Activated CD8-positive, alpha-beta T cell treated with anti-CD3 and anti-CD28 coated beads for 36 hours (primary cell): ENCODE measurements at regions of chr6 and their contacts with region 1.

Region 1: DNA sequence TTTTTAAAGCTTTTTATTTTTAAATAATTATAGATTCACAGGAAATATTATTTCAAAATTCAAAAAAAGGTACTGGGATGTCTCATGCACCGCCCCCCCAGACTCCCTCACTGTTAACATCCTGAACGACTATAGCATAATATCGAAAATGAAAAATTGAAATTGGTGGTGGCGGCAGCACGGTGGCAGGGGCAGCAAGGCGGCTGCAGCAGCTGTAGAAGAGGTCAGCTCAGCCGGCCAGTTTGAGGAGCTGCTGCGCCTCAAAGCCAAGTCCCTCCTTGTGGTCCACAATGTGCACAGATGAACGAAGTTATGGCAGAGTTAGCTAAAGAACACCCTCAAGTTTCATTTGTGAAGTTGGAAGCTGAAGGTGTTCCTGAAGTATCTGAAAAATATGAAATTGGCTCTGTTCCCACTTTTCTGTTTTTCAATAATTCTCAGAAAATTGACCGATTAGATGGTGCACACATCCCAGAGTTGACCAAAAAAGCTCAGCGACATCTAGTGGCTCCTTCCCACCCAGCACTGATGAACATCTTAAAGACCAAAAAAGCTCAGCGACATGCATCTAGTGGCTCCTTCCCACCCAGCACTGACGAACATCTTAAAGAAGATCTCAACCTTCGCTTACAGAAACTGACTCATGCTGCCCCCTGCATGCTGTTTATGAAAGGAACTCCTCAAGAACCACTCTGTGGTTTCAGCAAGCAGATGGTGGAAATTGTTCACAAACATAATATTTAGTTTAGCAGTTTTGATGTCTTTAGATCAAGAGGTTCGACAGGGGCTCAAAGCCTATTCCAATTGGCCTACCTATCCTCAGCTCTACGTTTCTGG is 100.8 kb downstream of the FAM217A start:
- DNase-seq: peak; percentile 78
- ATAC-seq: peak; percentile 99
- H3K4me3 Mint-ChIP-seq: peak overlapping the region; percentile 5
- H3K27ac Mint-ChIP-seq: peak overlapping the region; percentile 24
- H3K4me1 Mint-ChIP-seq: peaks cover 11% of the 10 kb centered on the region
- H3K27me3 Mint-ChIP-seq: peaks cover 2% of the 10 kb centered on the region
- CTCF ChIP-seq: peak; percentile 72

Region 2: DNA sequence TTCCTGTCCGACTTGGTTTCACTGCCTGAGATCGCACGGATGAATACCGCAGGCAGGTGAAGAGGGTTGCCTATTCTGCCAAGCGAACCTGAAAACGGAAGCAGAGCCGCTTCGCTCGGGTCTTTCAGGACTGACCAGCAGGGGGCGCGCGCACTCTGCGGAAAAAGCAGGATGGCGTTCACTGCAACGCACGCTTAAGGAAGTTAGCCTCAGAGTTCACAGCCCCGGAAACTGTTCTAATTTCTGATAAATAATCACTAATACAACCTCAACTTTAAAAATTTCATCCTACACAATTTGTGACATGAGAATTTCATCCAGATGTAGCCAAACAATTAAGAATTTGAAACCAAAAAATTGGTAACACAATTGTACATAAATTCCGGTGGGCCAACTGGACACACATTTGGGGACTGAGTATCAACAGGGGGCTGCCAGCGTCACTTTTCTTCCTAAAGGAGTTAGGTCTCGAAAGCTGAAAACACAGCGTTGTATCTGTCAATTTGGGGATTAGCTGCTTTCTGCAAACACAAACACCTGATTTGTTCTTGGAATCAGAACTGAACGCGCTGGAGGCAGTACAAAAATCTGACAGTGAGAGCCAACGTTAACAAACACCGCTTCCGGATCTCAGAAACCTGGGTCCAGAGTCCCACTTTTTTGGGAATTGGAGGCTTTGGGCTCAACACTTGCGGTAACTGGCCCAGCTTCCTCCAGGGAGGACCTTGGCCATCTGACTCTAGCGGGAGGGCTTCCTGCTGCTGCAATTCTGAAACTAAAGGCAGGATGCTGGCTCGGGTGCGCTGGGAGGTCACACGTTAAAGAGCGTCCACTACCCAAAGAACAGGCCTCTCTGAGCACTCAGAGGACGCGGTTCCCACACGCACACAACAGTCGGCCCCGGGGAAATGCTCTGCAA is 235.4 kb before region 1 on chr6:
- CTCF ChIA-PET with region 1: interaction called, 61 read pairs
- POLR2A ChIA-PET with region 1: no interaction called
- intact Hi-C with region 1: loop called (anchors 5 kb)
- DNase-seq: peak; percentile 90
- ATAC-seq: peak; percentile 92
- H3K4me3 Mint-ChIP-seq: no peak overlapping the region
- H3K27ac Mint-ChIP-seq: peak overlapping the region; percentile 20
- H3K4me1 Mint-ChIP-seq: peaks cover 7% of the 10 kb centered on the region
- H3K27me3 Mint-ChIP-seq: peaks cover 10% of the 10 kb centered on the region
- CTCF ChIP-seq: peak; percentile 94

Region 3: DNA sequence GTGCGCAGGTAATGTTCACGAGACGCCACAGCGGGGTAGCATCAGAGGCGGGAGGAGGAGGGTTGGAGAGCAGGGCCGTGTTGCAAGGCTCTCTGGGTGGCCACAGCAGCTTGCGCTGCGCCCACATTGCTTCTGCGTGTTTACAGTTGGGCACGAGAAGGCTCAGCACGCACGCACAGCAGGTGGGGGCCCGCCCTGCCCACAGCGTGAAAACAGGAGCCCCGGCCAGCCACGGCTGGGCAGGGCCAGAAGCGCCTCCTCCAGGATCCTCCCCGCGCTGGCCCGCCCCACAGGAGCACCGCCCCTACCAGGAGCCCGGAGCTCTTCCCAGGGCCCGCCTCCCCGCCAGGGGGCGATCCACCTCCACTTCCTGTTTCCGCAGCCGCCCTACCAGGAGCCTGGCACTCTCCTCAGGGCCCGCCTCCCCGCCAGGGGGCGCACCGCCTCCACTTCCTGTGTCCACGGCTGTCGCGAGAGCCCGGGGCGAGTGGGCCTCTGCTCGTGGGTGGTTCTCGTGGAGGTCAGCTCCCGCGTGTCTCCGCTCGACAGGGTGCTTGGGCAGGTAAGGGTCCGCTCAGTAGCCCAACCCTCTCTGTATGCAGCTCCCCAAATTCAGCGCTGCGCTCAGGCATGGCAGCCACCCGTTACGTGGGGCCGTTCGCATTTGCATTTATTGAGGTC is 129.0 kb before region 1 on chr6 and contains the start of gene FAM50B:
- CTCF ChIA-PET with region 1: interaction called, 33 read pairs
- POLR2A ChIA-PET with region 1: interaction called, 11 read pairs
- intact Hi-C with region 1: no loop called
- DNase-seq: peak; percentile 93
- ATAC-seq: peak; percentile 95
- H3K4me3 Mint-ChIP-seq: peak within 1 kb of the TSS; percentile 70
- H3K27ac Mint-ChIP-seq: peak within 1 kb of the TSS; percentile 76
- H3K4me1 Mint-ChIP-seq: peaks cover 20% of the 10 kb centered on the region
- H3K27me3 Mint-ChIP-seq: no peaks in the 10 kb centered on the region
- CTCF ChIP-seq: peak; percentile 83
- total RNA-seq, gene FAM50B: 5.2 to 6.0 TPM

Region 4: GRCh38 chr6:3939964-3940363 is 38.1 kb before region 1 on chr6:
- CTCF ChIA-PET with region 1: interaction called, 13 read pairs
- POLR2A ChIA-PET with region 1: no interaction called
- intact Hi-C with region 1: no loop called
- DNase-seq: no peak
- ATAC-seq: no peak
- H3K4me3 Mint-ChIP-seq: no peak overlapping the region
- H3K27ac Mint-ChIP-seq: no peak overlapping the region
- H3K4me1 Mint-ChIP-seq: peaks cover 3% of the 10 kb centered on the region
- H3K27me3 Mint-ChIP-seq: peaks cover 20% of the 10 kb centered on the region
- CTCF ChIP-seq: no peak

Region 5: DNA sequence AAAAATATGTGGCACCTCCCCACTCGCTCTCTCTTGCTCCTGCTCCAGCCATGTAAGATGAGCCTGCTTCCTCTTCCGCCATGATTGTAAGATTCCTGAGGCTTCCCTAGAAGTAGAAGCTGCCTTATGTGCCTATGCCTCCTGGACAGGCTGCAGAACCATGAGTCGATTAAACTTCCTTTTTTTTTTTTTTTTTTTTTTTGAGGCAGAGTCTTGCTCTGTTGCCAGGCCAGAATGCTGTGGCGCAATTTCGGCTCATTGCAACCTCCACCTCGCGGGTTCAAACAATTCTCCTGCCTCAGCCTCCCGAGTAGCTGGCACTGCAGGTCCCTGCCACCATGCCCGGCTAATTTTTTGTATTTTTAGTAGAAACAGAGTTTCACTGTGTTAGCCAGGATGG is 11.7 kb before region 1 on chr6:
- CTCF ChIA-PET with region 1: interaction called, 14 read pairs
- POLR2A ChIA-PET with region 1: no interaction called
- intact Hi-C with region 1: no loop called
- DNase-seq: no peak
- ATAC-seq: no peak
- H3K4me3 Mint-ChIP-seq: no peak overlapping the region
- H3K27ac Mint-ChIP-seq: no peak overlapping the region
- H3K4me1 Mint-ChIP-seq: no peaks in the 10 kb centered on the region
- H3K27me3 Mint-ChIP-seq: no peaks in the 10 kb centered on the region
- CTCF ChIP-seq: no peak

Region 6: DNA sequence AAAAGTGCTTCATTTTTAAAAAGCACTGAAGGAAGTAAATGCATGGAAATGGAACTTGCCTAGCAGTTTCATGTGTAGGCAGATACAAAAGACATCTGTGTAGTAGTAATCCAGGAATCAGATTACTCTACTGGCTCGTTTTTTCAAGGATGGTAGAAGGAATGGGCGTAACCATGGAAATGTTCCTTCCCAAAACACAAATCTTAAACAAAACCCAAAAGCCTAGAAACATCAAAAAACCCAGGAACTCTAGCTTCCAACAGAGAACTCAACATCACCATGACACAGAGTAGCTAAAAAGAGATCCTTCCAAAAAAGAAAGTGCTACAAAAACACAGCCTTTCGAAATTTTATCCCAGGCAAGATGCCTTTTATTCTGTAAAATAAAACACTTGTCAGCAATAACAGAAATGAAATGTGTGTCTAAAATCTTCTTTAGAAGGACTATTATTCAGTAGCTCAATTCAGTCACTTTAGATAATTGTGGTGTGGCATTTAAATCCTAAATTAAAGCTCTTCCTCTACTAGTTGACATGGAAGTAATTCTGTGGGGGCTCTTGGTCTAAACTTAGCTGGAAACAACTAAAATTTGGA is 19.2 kb after region 1 on chr6:
- CTCF ChIA-PET with region 1: interaction called, 26 read pairs
- POLR2A ChIA-PET with region 1: interaction called, 3 read pairs
- intact Hi-C with region 1: no loop called
- DNase-seq: no peak
- ATAC-seq: no peak
- H3K4me3 Mint-ChIP-seq: no peak overlapping the region
- H3K27ac Mint-ChIP-seq: no peak overlapping the region
- H3K4me1 Mint-ChIP-seq: peaks cover 13% of the 10 kb centered on the region
- H3K27me3 Mint-ChIP-seq: no peaks in the 10 kb centered on the region
- CTCF ChIP-seq: no peak

Region 7: GRCh38 chr6:4074478-4075235 is 96.6 kb after region 1 on chr6:
- CTCF ChIA-PET with region 1: no interaction called
- POLR2A ChIA-PET with region 1: no interaction called
- intact Hi-C with region 1: no loop called
- DNase-seq: no peak
- ATAC-seq: no peak
- H3K4me3 Mint-ChIP-seq: no peak overlapping the region
- H3K27ac Mint-ChIP-seq: no peak overlapping the region
- H3K4me1 Mint-ChIP-seq: no peaks in the 10 kb centered on the region
- H3K27me3 Mint-ChIP-seq: peaks cover 13% of the 10 kb centered on the region
- CTCF ChIP-seq: no peak